ENCODE measurements at regions of chr12 and their contacts with region 1.

Region 1: GRCh38 chr12:13362260-13362841 is 165.8 kb downstream of the EMP1 start:
- DNase-seq: peak in 1 of 2 experiments; percentile 82
- H3K4me3 ChIP-seq: no peak overlapping the region
- H3K27ac ChIP-seq: no peak overlapping the region
- H3K4me1 ChIP-seq: no peaks in the 10 kb centered on the region
- H3K27me3 ChIP-seq: no peaks in the 10 kb centered on the region
- CTCF ChIP-seq: peak; percentile 72

Region 2: DNA sequence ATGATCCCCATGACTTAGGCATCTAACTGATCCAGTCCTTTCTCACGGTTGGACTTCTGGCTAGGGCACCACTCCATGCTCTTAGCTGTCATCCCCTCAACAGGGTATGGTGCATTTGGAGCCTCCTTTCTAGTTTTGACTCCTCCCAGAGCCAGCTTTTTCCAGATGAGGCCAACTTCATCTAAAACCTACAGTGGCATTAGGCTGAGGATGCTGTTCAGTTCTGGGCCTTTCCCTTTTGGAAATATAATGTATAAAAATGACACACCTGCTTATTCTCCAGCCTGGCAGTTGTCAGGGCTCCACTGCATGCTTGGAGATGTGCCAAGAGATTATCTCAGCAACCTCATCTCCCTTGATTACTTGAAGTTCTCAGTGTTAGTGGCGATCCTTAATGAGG is 73.8 kb after region 1 on chr12:
- CTCF ChIA-PET with region 1: interaction called, 12 read pairs
- POLR2A ChIA-PET with region 1: no interaction called
- intact Hi-C with region 1: no loop called
- DNase-seq: no peak
- H3K4me3 ChIP-seq: no peak overlapping the region
- H3K27ac ChIP-seq: no peak overlapping the region
- H3K4me1 ChIP-seq: no peaks in the 10 kb centered on the region
- H3K27me3 ChIP-seq: no peaks in the 10 kb centered on the region
- CTCF ChIP-seq: no peak

Region 3: GRCh38 chr12:13534645-13535398 is 172.5 kb after region 1 on chr12:
- CTCF ChIA-PET with region 1: interaction called, 33 read pairs
- POLR2A ChIA-PET with region 1: no interaction called
- intact Hi-C with region 1: loop called (anchors 2 kb)
- DNase-seq: peak in 1 of 2 experiments; percentile 65
- H3K4me3 ChIP-seq: no peak overlapping the region
- H3K27ac ChIP-seq: no peak overlapping the region
- H3K4me1 ChIP-seq: no peaks in the 10 kb centered on the region
- H3K27me3 ChIP-seq: no peaks in the 10 kb centered on the region
- CTCF ChIP-seq: peak; percentile 92

Region 4: GRCh38 chr12:13661005-13661887 is 298.9 kb after region 1 on chr12:
- CTCF ChIA-PET with region 1: interaction called, 5 read pairs
- POLR2A ChIA-PET with region 1: no interaction called
- intact Hi-C with region 1: loop called (anchors 1 kb)
- DNase-seq: peak in 1 of 2 experiments; percentile 31
- H3K4me3 ChIP-seq: no peak overlapping the region
- H3K27ac ChIP-seq: no peak overlapping the region
- H3K4me1 ChIP-seq: no peaks in the 10 kb centered on the region
- H3K27me3 ChIP-seq: no peaks in the 10 kb centered on the region
- CTCF ChIP-seq: peak; percentile 86

Region 5: DNA sequence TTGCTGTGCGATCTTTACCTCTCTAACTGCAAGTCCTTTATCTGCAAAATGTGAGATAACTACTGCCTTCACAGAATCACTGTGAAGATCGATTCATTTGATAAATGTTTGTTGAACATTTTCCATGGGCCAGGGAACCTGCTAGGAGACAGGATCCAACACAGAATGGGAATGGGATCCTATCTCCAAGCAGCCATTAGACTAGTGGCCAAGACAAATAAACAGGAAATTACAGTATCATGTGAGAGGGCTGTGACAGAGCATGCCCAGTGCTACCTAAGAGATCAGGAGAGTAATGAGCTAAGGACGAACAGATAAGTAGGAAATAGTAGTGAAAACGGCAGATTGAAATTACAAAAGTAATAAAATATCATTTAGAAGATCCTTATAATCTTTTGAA is 513.4 kb after region 1 on chr12:
- CTCF ChIA-PET with region 1: no interaction called
- POLR2A ChIA-PET with region 1: no interaction called
- intact Hi-C with region 1: loop called (anchors 2 kb)
- DNase-seq: no peak
- H3K4me3 ChIP-seq: no peak overlapping the region
- H3K27ac ChIP-seq: no peak overlapping the region
- H3K4me1 ChIP-seq: no peaks in the 10 kb centered on the region
- H3K27me3 ChIP-seq: peaks cover 4% of the 10 kb centered on the region; the same call in 1 of the 2 replicates
- CTCF ChIP-seq: no peak

Region 6: DNA sequence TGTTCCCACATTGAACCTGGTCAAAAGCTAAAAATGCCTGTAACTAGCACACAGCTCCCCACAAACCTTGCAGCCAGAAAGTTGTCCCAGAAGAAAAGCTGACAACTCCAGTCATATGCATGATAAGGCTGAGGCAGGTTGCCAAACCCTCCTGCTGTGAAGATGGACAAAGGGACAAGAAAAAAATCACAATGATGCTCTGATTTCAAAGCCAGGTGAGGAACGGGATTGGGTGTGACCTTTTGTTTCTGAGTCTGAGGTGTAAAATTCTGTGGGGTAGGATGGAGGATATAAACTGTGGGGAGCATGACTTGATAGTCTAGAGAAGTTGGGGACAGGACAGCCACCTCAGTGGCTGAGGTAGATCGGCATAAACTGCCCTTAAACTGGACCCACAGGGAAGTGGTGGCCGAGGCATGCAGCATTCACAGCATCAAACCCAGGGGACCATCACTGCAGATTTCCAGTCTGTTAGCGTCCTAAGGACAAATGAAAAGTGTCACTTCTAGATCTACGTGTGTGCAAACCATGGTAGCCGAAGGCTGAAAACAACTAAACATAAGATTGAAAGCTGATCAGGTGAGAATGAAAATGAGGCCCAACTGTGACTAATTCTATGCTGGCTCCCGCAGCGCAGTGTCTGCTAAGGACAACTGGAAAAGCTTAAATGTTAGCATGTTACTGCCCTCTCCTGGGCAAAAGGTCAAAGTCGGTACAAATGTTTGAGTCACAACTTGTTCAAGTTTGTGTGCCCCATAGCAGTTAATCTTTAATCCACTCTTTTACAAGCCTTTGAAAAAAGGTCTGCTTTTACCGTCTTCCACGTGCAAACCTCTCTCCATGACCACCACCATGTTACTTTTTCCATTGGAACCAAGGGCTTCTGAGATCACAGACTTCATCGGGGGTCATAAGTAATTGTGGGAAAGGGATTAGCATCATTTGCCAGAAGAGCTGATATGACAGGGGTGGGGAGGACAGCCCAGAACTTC is 579.2 kb after region 1 on chr12:
- CTCF ChIA-PET with region 1: no interaction called
- POLR2A ChIA-PET with region 1: no interaction called
- intact Hi-C with region 1: loop called (anchors 1 kb)
- DNase-seq: peak; percentile 53 to 68
- H3K4me3 ChIP-seq: no peak overlapping the region
- H3K27ac ChIP-seq: no peak overlapping the region
- H3K4me1 ChIP-seq: no peaks in the 10 kb centered on the region; the same call in 1 of the 2 replicates
- H3K27me3 ChIP-seq: no peaks in the 10 kb centered on the region
- CTCF ChIP-seq: peak; percentile 61